ENCODE measurements at regions of chr10 and their contacts with region 1.

Region 1: GRCh38 chr10:71899665-71900412 is 48.8 kb upstream of the PSAP start:
- DNase-seq: no peak
- ATAC-seq: no peak
- H3K4me3 ChIP-seq: no peak overlapping the region
- H3K4me3 Mint-ChIP-seq: no peak overlapping the region
- H3K27ac ChIP-seq: no peak overlapping the region
- H3K27ac Mint-ChIP-seq: no peak overlapping the region
- H3K4me1 ChIP-seq: peaks cover 0 to 6% of the 10 kb centered on the region in 2 donors
- H3K4me1 Mint-ChIP-seq: peaks cover 0 to 17% (median 4%) of the 10 kb centered on the region in 7 donors
- H3K27me3 ChIP-seq: no peaks in the 10 kb centered on the region
- H3K27me3 Mint-ChIP-seq: peaks cover 0 to 3% (median 0%) of the 10 kb centered on the region in 5 donors

Region 2: GRCh38 chr10:70820976-70821755 is 1078.7 kb before region 1 on chr10:
- CTCF ChIA-PET with region 1: no interaction called
- POLR2A ChIA-PET with region 1: no interaction called
- intact Hi-C with region 1: no loop called
- DNase-seq: peak in 1 of 9 donors; percentile 8
- ATAC-seq: peak; percentile 32
- H3K4me3 ChIP-seq: no peak overlapping the region
- H3K4me3 Mint-ChIP-seq: no peak overlapping the region
- H3K27ac ChIP-seq: no peak overlapping the region
- H3K27ac Mint-ChIP-seq: peak overlapping the region in 2 of 9 donors; percentile 36 to 63
- H3K4me1 ChIP-seq: peaks cover 0 to 10% of the 10 kb centered on the region in 2 donors
- H3K4me1 Mint-ChIP-seq: peaks cover 16 to 43% (median 31%) of the 10 kb centered on the region in 7 donors
- H3K27me3 ChIP-seq: no peaks in the 10 kb centered on the region
- H3K27me3 Mint-ChIP-seq: no peaks in the 10 kb centered on the region

Region 3: DNA sequence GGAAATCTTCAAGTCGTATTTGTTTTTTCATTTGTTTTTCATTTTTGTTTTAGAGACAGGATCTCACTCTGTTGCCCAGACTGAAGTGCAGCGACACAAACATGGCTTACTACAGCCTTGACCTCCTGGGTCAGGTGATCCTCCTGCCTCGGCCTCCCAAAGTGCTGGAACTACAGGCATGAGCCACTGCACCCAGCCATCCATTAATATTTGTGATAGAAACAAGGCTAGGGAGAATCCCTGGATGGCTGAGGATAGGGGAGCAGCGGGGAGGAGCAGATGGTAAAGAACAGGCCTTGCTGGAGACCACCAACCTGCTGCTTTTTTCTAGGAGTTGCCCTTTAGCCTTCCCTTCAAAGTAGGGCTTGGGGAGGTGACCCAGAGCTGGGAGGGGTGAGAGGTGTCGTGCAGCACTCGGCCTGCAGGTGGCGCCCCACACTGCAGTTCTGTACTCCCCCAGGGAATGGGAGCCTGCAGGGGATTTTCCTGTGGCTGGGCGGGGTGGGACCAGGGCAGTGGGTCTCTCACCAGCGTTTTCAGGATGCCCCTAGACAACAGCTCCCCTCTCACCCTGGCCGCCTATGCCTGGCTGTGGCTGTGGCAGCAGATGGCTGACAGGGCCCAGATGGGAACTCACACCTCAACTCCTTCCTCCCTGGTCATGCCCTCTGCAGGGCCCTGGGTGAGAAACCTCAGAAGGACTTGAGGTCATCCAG is 515.7 kb before region 1 on chr10:
- CTCF ChIA-PET with region 1: no interaction called
- POLR2A ChIA-PET with region 1: no interaction called
- intact Hi-C with region 1: loop called (anchors 1 to 5 kb)
- DNase-seq: peak; percentile 40 to 82 (median 61)
- ATAC-seq: peak; percentile 94
- H3K4me3 ChIP-seq: no peak overlapping the region
- H3K4me3 Mint-ChIP-seq: no peak overlapping the region
- H3K27ac ChIP-seq: no peak overlapping the region
- H3K27ac Mint-ChIP-seq: no peak overlapping the region
- H3K4me1 ChIP-seq: no peaks in the 10 kb centered on the region
- H3K4me1 Mint-ChIP-seq: no peaks in the 10 kb centered on the region
- H3K27me3 ChIP-seq: no peaks in the 10 kb centered on the region
- H3K27me3 Mint-ChIP-seq: peaks cover 0 to 24% (median 7%) of the 10 kb centered on the region in 5 donors

Measured in naive thymus-derived CD4-positive, alpha-beta T cell (primary cell).